Panc1 (cell line): ENCODE measurements at regions of chr17 and their contacts with region 1.

Region 1: GRCh38 chr17:75393523-75394331 is 11.8 kb downstream of the GRB2 start:
- DNase-seq: peak; percentile 77
- ATAC-seq: peak; percentile 99
- H3K4me3 ChIP-seq: peak overlapping the region; percentile 74 to 82
- H3K27ac ChIP-seq: peak overlapping the region; percentile 93
- H3K4me1 ChIP-seq: peaks cover 47% of the 10 kb centered on the region
- H3K27me3 ChIP-seq: no peaks in the 10 kb centered on the region
- CTCF ChIP-seq: no peak

Region 2: GRCh38 chr17:75154195-75155106 is 239.3 kb before region 1 on chr17 and contains the start of gene JPT1:
- CTCF ChIA-PET with region 1: interaction called, 14 read pairs
- POLR2A ChIA-PET with region 1: no interaction called
- in situ Hi-C with region 1: no loop called
- intact Hi-C with region 1: no loop called
- DNase-seq: peak; percentile 96
- ATAC-seq: peak; percentile 95
- H3K4me3 ChIP-seq: peak within 1 kb of the TSS; percentile 84 to 85
- H3K27ac ChIP-seq: peak within 1 kb of the TSS; percentile 92
- H3K4me1 ChIP-seq: peaks cover 24% of the 10 kb centered on the region
- H3K27me3 ChIP-seq: no peaks in the 10 kb centered on the region
- CTCF ChIP-seq: no peak
- total RNA-seq, gene JPT1: 448 TPM

Region 3: GRCh38 chr17:75524953-75525719 is 131.4 kb after region 1 on chr17 and contains the start of gene LLGL2:
- CTCF ChIA-PET with region 1: no interaction called
- POLR2A ChIA-PET with region 1: no interaction called
- in situ Hi-C with region 1: no loop called
- intact Hi-C with region 1: no loop called
- DNase-seq: no peak
- ATAC-seq: peak; percentile 88
- H3K4me3 ChIP-seq: peak within 1 kb of the TSS; percentile 68 to 75
- H3K27ac ChIP-seq: peak within 1 kb of the TSS; percentile 81
- H3K4me1 ChIP-seq: peaks cover 13% of the 10 kb centered on the region
- H3K27me3 ChIP-seq: no peaks in the 10 kb centered on the region
- CTCF ChIP-seq: no peak; the same call in 1 of the 2 replicates
- total RNA-seq, gene LLGL2: 201 TPM

Region 4: GRCh38 chr17:75601057-75602051 is 207.6 kb after region 1 on chr17:
- CTCF ChIA-PET with region 1: no interaction called
- POLR2A ChIA-PET with region 1: no interaction called
- in situ Hi-C with region 1: no loop called
- intact Hi-C with region 1: no loop called
- DNase-seq: peak; percentile 33
- ATAC-seq: peak; percentile 80
- H3K4me3 ChIP-seq: no peak overlapping the region
- H3K27ac ChIP-seq: no peak overlapping the region
- H3K4me1 ChIP-seq: no peaks in the 10 kb centered on the region
- H3K27me3 ChIP-seq: no peaks in the 10 kb centered on the region
- CTCF ChIP-seq: peak; percentile 95

Region 5: DNA sequence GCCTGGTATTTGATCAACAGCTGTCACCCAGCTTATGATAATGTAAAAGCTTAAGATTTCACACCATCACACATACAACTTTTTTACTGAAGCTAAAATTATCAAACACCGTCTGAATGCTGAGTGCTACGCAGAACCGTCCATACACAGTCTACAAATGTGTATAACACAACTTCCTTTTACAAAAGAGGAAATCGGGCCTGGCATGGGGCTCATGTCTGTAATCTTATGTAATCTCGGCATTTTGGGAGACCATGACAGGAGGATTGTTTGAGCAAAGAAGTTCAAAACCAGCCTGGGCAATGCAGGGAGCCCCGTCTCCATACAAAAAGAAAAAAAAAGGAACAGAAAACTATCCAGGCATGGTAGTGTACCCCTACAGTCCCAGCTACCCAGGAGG is 934.0 kb after region 1 on chr17:
- CTCF ChIA-PET with region 1: no interaction called
- POLR2A ChIA-PET with region 1: interaction called, 11 read pairs
- in situ Hi-C with region 1: no loop called
- intact Hi-C with region 1: no loop called
- DNase-seq: no peak
- ATAC-seq: no peak
- H3K4me3 ChIP-seq: no peak overlapping the region
- H3K27ac ChIP-seq: no peak overlapping the region
- H3K4me1 ChIP-seq: no peaks in the 10 kb centered on the region
- H3K27me3 ChIP-seq: no peaks in the 10 kb centered on the region
- CTCF ChIP-seq: no peak